ENCODE measurements at regions of chr1 and their contacts with region 1.

Region 1: GRCh38 chr1:169106095-169106920 is at the start of gene ATP1B1:
- DNase-seq: peak; percentile 91 to 98 (median 96)
- ATAC-seq: peak; percentile 98
- H3K4me3 ChIP-seq: peak within 1 kb of the TSS; percentile 66
- H3K27ac ChIP-seq: no peak within 1 kb of the TSS
- H3K4me1 ChIP-seq: peaks cover 3 to 18% of the 10 kb centered on the region in 2 experiments; a peak in 4 of 5 replicates
- H3K27me3 ChIP-seq: peaks cover 15 to 40% of the 10 kb centered on the region in 2 experiments
- CTCF ChIP-seq: peak; percentile 26 to 55 (median 46); a peak in 3 of 6 replicates
- EP300 ChIP-seq: no peak
- POLR2A ChIP-seq: peak; percentile 73
- RAD21 ChIP-seq: peak; percentile 12 to 13; a peak in 1 of 4 replicates
- polyA plus RNA-seq, gene ATP1B1: 0.76 to 1.1 TPM

Region 2: DNA sequence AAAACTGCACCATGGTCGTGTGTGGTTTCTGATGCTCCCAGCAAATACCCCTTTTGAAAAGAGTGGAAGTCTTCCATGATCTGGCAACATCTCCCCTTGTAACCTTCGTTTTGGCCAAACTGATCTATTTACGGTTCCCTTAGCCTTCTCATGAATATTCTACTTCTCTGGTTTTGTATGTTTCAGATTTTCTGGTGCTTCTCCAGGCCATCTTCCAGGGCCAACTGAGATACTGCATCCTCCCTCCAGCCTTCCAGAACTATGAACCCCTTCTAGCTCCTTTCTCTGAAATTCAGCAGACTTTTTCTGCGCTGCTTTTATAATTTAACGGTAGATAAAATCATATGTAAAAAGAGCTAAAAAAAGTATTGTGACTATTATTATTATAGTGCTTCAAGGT is 660.2 kb before region 1 on chr1:
- CTCF ChIA-PET with region 1: no interaction called
- POLR2A ChIA-PET with region 1: no interaction called
- in situ Hi-C with region 1: no loop called
- intact Hi-C with region 1: loop called (anchors 5 kb)
- DNase-seq: no peak
- ATAC-seq: peak; percentile 16; the same call in 2 of the 3 replicates
- H3K4me3 ChIP-seq: no peak overlapping the region
- H3K27ac ChIP-seq: no peak overlapping the region
- H3K4me1 ChIP-seq: peaks cover 0 to 8% of the 10 kb centered on the region in 2 experiments; a peak in 2 of 5 replicates
- H3K27me3 ChIP-seq: peaks cover 2 to 4% of the 10 kb centered on the region in 2 experiments; a peak in 1 of 5 replicates
- CTCF ChIP-seq: no peak
- EP300 ChIP-seq: no peak
- POLR2A ChIP-seq: no peak
- RAD21 ChIP-seq: no peak

Measured in K562 (cell line).